PC-9 (cell line): ENCODE measurements at regions of chr21 and their contacts with region 1.

Region 1: DNA sequence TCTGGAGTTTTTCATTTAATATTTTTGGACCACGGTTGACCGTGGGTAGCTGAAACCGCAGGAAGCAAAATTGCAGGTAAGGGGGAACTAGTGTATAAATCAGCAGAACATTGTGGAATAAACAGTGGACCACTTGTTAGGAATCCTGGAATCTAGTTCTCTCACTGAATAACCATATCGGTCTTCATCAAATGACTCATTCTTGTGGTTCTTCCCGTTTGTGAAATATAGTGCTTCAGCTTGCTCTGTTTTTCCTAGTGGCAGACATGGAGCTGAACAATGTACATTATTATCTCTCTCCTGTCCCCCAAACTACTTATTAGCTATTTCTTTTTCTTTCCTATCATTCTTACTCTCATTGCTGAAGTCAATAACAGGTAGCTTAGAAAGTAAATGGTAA is 61.9 kb downstream of the HSPA13 start:
- DNase-seq: peak in 1 of 2 experiments; percentile 48
- H3K4me3 ChIP-seq: no peak overlapping the region
- H3K27ac ChIP-seq: no peak overlapping the region
- H3K4me1 ChIP-seq: no peaks in the 10 kb centered on the region
- H3K27me3 ChIP-seq: no peaks in the 10 kb centered on the region
- CTCF ChIP-seq: no peak

Region 2: GRCh38 chr21:14366998-14367397 is 46.0 kb after region 1 on chr21:
- CTCF ChIA-PET with region 1: no interaction called
- POLR2A ChIA-PET with region 1: no interaction called
- intact Hi-C with region 1: loop called (anchors 5 kb)
- DNase-seq: no peak
- H3K4me3 ChIP-seq: no peak overlapping the region
- H3K27ac ChIP-seq: no peak overlapping the region
- H3K4me1 ChIP-seq: no peaks in the 10 kb centered on the region
- H3K27me3 ChIP-seq: no peaks in the 10 kb centered on the region
- CTCF ChIP-seq: no peak